CD14-positive monocyte (primary cell): ENCODE measurements at regions of chr9 and their contacts with region 1.

Region 1: GRCh38 chr9:91193658-91194391 is 167.9 kb downstream of the AUH start:
- DNase-seq: peak; percentile 74 to 87 (median 87)
- H3K4me3 ChIP-seq: peak overlapping the region; percentile 25 to 71 (median 37)
- H3K4me3 Mint-ChIP-seq: peak overlapping the region; percentile 79 to 92
- H3K27ac ChIP-seq: peak overlapping the region; percentile 87 to 94
- H3K27ac Mint-ChIP-seq: peak overlapping the region; percentile 93 to 99 (median 97)
- H3K4me1 ChIP-seq: peaks cover 72 to 80% of the 10 kb centered on the region in 2 donors
- H3K4me1 Mint-ChIP-seq: peaks cover 72% of the 10 kb centered on the region
- H3K27me3 ChIP-seq: no peaks in the 10 kb centered on the region
- H3K27me3 Mint-ChIP-seq: peaks cover 0 to 1% (median 0%) of the 10 kb centered on the region in 3 donors
- CTCF ChIP-seq: no peak

Region 2: DNA sequence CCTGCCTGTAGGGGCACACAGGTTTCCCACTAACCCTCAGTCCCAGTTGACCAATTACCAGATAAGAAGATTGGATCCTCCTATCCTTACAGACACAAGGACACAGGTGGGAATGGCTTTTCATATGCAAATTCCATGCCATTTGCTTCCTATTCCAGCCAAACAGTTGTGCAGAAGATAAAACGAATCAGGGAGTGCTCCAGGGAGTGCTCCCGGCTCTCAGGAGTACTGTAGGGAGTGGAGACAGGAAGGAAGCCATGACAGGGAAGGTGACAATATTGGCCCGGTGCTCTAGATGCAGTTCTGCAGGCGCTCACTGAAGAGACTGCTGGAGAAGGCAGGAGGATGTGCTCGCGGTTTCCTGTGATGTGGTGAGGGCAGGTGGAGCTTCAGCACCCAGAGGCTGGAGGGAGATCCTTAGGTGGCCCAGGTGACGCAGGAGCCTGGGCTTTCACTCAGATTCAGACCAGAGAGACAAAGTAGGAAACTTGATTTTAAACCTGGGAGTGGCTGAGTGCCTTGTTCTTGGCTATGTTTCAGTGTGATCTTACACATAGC is 92.1 kb before region 1 on chr9:
- intact Hi-C with region 1: loop called in 1 of 2 experiments (anchors 5 kb)
- DNase-seq: no peak
- H3K4me3 ChIP-seq: no peak overlapping the region
- H3K4me3 Mint-ChIP-seq: no peak overlapping the region
- H3K27ac ChIP-seq: no peak overlapping the region
- H3K27ac Mint-ChIP-seq: no peak overlapping the region
- H3K4me1 ChIP-seq: peaks cover 22 to 24% of the 10 kb centered on the region in 2 donors
- H3K4me1 Mint-ChIP-seq: peaks cover 30% of the 10 kb centered on the region
- H3K27me3 ChIP-seq: no peaks in the 10 kb centered on the region
- H3K27me3 Mint-ChIP-seq: peaks cover 2 to 9% (median 3%) of the 10 kb centered on the region in 3 donors
- CTCF ChIP-seq: no peak

Region 3: DNA sequence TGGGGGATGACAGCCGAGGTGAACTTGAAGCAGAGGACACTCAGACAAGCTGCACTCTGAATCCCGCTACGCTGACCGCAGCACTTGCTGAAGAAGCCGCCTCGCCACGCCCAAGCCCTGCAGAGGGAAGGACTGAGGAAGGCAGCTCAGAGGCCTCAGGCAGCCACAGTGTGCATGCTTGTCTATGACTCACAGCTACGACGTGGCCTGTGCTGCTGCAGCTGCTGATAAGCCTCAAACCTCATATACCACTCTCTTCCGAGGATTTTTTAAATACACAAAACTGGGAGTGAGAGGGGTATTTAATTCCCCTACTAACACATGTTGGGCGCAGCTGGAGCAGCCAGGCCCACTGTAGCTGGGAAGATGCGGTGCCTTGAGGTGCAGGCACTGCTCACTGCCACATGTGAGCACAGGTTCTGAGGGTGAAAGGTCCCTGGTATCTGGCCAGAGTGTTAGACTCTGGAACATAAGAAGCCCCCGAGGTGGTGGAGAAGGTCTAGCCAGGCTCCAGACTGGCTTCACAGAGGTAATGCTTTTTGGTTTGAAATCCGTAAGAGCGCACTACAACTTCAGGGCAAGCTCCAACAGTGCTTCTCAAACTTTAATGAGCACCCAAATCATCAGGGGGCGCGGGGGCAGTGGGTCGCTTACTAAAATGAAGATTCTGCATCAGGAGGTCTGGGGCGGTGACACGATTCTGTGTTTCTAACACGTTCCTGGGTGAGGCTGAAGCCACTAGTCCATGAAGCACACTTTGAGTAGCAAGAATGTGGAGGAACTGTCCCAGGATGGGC is 28.9 kb before region 1 on chr9:
- intact Hi-C with region 1: loop called in 1 of 2 experiments (anchors 2 kb)
- DNase-seq: peak; percentile 95 to 96 (median 96)
- H3K4me3 ChIP-seq: peak overlapping the region in 1 of 3 experiments; percentile 28
- H3K4me3 Mint-ChIP-seq: peak overlapping the region; percentile 64 to 72
- H3K27ac ChIP-seq: peak overlapping the region; percentile 11 to 73
- H3K27ac Mint-ChIP-seq: peak overlapping the region; percentile 40 to 97 (median 83)
- H3K4me1 ChIP-seq: peaks cover 39 to 44% of the 10 kb centered on the region in 2 donors
- H3K4me1 Mint-ChIP-seq: peaks cover 41% of the 10 kb centered on the region
- H3K27me3 ChIP-seq: no peaks in the 10 kb centered on the region
- H3K27me3 Mint-ChIP-seq: peaks cover 0 to 5% (median 4%) of the 10 kb centered on the region in 3 donors
- CTCF ChIP-seq: no peak

Region 4: GRCh38 chr9:91298311-91298710 is 104.5 kb after region 1 on chr9:
- intact Hi-C with region 1: loop called in 1 of 2 experiments (anchors 5 kb)
- DNase-seq: peak; percentile 68 to 88 (median 77)
- H3K4me3 ChIP-seq: peak overlapping the region in 1 of 3 experiments; percentile 36
- H3K4me3 Mint-ChIP-seq: peak overlapping the region; percentile 56 to 73
- H3K27ac ChIP-seq: peak overlapping the region; percentile 67 to 71
- H3K27ac Mint-ChIP-seq: peak overlapping the region; percentile 90 to 97 (median 96)
- H3K4me1 ChIP-seq: peaks cover 40 to 63% of the 10 kb centered on the region in 2 donors
- H3K4me1 Mint-ChIP-seq: peaks cover 60% of the 10 kb centered on the region
- H3K27me3 ChIP-seq: no peaks in the 10 kb centered on the region
- H3K27me3 Mint-ChIP-seq: peaks cover 0 to 3% (median 0%) of the 10 kb centered on the region in 3 donors
- CTCF ChIP-seq: no peak